Activated CD4-positive, alpha-beta T cell treated with anti-CD3 and anti-CD28 coated beads, Interleukin-2, amount 10 ng/mL, durations not matched to agents 7 days and 5 days (primary cell): ENCODE measurements at regions of chr2 and their contacts with region 1.

Region 1: GRCh38 chr2:219543601-219544358 is at the starts of genes CHPF and TMEM198:
- DNase-seq: peak; percentile 95
- H3K4me3 Mint-ChIP-seq: peak within 1 kb of the TSS; percentile 84
- H3K27ac Mint-ChIP-seq: peak within 1 kb of the TSS; percentile 89
- H3K4me1 Mint-ChIP-seq: peaks cover 24% of the 10 kb centered on the region
- H3K27me3 Mint-ChIP-seq: peaks cover 15% of the 10 kb centered on the region
- total RNA-seq, gene CHPF: 6.4 to 7.8 TPM
- total RNA-seq, gene TMEM198: 0.44 to 0.69 TPM

Region 2: GRCh38 chr2:219352448-219353023 is 191.2 kb before region 1 on chr2:
- CTCF ChIA-PET with region 1: no interaction called
- POLR2A ChIA-PET with region 1: no interaction called
- DNase-seq: peak; percentile 74
- H3K4me3 Mint-ChIP-seq: no peak overlapping the region
- H3K27ac Mint-ChIP-seq: no peak overlapping the region
- H3K4me1 Mint-ChIP-seq: no peaks in the 10 kb centered on the region
- H3K27me3 Mint-ChIP-seq: peaks cover 34% of the 10 kb centered on the region

Region 3: GRCh38 chr2:219388127-219388844 is 155.5 kb before region 1 on chr2:
- CTCF ChIA-PET with region 1: interaction called, 10 read pairs
- POLR2A ChIA-PET with region 1: no interaction called
- DNase-seq: peak; percentile 97
- H3K4me3 Mint-ChIP-seq: peak overlapping the region; percentile 96
- H3K27ac Mint-ChIP-seq: peak overlapping the region; percentile 90
- H3K4me1 Mint-ChIP-seq: peaks cover 17% of the 10 kb centered on the region
- H3K27me3 Mint-ChIP-seq: peaks cover 3% of the 10 kb centered on the region

Region 4: GRCh38 chr2:219498280-219499057 is 45.3 kb before region 1 on chr2 and contains the start of gene GMPPA:
- CTCF ChIA-PET with region 1: interaction called, 33 read pairs
- POLR2A ChIA-PET with region 1: no interaction called
- DNase-seq: peak; percentile 97
- H3K4me3 Mint-ChIP-seq: peak within 1 kb of the TSS; percentile 85
- H3K27ac Mint-ChIP-seq: peak within 1 kb of the TSS; percentile 85
- H3K4me1 Mint-ChIP-seq: peaks cover 35% of the 10 kb centered on the region
- H3K27me3 Mint-ChIP-seq: peaks cover 40% of the 10 kb centered on the region
- total RNA-seq, gene GMPPA: 34.5 to 40.5 TPM

Region 5: DNA sequence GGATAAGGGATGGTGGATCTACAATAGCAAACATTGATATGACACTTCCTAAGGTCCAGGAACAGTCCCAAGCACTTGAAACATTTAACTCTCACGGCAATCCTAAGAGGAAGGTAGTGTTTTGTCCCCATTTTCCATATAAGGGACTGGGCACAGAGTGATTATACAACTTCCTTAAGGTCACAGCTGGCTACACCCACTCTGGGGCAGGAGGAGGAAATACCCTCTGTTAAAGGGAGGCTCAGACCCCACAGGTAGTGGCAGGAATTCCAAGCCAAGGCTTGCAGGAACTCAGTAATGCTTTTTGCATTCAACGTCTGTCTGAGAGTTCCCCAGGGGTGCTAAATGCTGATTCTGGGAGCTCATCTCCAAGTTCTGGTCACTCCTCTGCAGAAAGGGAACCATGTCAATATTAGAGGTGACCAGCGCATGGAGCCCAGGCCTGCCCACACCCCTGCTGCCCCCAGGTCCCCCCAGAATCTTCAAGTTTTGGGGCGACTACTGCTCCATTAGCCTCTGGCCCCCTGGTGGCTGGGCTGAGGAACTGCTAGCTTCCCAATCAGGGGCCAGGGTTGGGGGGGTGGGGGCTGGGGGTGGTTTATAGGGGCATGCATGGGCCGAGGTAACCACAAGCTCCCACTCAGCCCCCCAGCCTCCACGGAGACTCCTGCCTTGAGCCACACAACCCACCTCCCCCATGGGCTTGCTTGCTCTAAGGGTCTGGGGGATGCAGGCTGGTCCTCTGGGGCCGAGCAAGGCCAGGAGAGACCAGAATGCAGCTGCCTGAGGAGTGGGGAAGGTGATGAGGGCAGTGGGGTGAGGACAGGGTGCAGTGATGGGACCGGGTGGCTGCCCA is 16.5 kb after region 1 on chr2:
- CTCF ChIA-PET with region 1: interaction called, 25 read pairs
- POLR2A ChIA-PET with region 1: no interaction called
- DNase-seq: no peak
- H3K4me3 Mint-ChIP-seq: no peak overlapping the region
- H3K27ac Mint-ChIP-seq: no peak overlapping the region
- H3K4me1 Mint-ChIP-seq: no peaks in the 10 kb centered on the region
- H3K27me3 Mint-ChIP-seq: peaks cover 5% of the 10 kb centered on the region

Region 6: DNA sequence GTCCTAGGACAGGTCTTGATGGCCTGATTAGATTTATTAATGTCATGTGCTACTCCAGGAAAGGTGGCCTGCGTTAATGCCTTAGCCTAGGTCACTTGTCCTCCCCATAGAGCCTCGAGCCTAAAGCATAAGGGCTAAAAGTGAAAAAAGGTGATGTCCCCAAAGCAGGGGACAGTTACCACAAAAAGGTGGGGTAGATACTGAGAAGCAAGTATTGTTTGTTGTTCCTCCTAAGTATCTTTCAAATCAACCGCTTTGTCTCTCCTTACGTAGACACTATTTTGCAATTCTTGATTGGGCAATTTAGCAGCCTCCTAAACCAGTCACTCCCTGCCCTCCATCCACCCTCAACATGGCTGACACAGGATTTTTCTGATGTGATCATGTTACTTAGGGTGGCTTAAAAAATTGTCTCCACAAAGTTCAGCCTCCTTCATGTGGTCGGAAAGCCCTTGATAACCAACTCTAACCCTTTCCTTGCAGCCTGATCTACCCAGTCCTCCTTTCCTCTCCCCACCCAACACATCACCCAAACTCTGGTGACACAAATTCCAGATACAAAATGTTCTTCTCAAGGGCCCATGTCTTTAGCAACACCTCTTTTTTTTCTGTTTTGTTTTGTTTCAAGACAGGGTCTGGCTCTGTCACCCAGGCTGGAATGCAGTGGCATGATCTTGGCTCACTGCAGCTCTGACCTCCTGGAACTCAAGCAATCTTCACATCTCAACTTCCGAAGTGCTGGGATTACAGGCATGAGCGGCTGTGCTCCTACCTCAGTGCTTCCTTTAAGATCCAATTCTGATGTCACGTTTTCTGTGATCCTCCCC is 35.2 kb after region 1 on chr2:
- CTCF ChIA-PET with region 1: no interaction called
- POLR2A ChIA-PET with region 1: no interaction called
- DNase-seq: no peak
- H3K4me3 Mint-ChIP-seq: no peak overlapping the region
- H3K27ac Mint-ChIP-seq: no peak overlapping the region
- H3K4me1 Mint-ChIP-seq: no peaks in the 10 kb centered on the region
- H3K27me3 Mint-ChIP-seq: peaks cover 6% of the 10 kb centered on the region

Region 7: GRCh38 chr2:219642465-219643080 is 98.8 kb after region 1 on chr2:
- CTCF ChIA-PET with region 1: interaction called, 39 read pairs
- POLR2A ChIA-PET with region 1: no interaction called
- DNase-seq: peak; percentile 93
- H3K4me3 Mint-ChIP-seq: no peak overlapping the region
- H3K27ac Mint-ChIP-seq: no peak overlapping the region
- H3K4me1 Mint-ChIP-seq: peaks cover 9% of the 10 kb centered on the region
- H3K27me3 Mint-ChIP-seq: peaks cover 6% of the 10 kb centered on the region

Region 8: DNA sequence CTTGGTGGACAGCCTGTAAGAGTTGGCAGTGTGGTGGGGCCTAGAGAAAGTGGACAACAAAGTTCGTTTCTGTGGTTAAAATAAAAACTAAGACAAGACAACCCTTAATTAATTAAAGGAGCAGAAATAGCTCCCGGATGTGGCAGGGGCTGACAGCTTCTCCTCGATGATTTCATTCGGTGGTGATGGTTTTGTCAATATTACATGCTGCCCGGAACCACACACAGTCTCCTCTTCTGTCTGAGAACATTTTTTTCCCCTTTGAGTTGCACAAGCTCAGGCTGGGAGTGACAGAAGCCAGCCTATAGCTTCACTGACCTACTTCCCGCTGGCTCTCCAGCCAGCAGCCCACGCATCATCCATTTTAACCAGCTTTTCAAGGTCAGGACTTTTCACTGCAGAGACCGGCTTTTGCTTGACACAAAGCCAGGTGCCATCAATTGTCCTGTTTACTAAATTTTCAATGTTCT is 462.4 kb after region 1 on chr2:
- CTCF ChIA-PET with region 1: no interaction called
- POLR2A ChIA-PET with region 1: no interaction called
- DNase-seq: no peak
- H3K4me3 Mint-ChIP-seq: no peak overlapping the region
- H3K27ac Mint-ChIP-seq: no peak overlapping the region
- H3K4me1 Mint-ChIP-seq: no peaks in the 10 kb centered on the region
- H3K27me3 Mint-ChIP-seq: no peaks in the 10 kb centered on the region